K562 (cell line): ENCODE measurements at regions of chr3 and their contacts with region 1.

Region 1: DNA sequence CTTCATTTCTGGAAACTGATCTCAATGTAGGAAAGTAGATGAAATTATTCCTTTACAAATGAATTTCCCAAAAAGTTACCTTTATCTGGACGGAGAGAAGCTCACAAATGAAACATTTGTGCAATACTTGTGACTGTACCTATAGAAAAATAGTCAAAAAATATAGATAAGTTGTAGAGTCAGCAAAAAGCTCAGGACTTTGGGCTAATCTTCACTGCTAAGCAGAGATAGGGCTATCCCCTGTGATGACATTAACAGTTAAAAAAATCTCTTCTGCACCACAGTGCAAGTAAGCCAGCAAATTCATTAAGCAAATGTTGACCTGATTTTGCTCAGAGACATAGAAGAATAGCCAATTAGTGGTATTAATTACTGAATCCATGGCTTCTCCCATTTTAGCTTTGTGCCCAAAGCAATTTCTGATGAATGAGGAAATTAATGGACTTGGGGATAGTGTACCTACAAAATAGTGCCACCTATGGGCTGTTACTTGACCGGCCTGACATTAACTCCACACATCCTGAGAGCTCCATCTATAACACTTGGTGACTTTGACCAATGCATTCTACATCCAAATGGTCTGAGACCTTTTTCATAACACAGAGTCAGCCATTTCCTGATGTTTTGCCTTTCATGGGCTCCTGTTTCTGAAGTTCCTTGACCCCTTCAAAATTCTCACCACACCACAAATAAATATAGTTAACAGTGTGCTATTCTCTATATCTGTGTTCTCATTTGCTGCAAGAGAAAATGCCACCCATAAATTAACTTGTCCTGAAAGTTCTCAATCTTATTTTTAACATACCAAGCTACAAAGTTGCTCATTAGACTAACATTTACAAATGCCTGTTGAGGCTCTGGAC is 105.0 kb downstream of the SSR3 start:
- DNase-seq: peak; percentile 40 to 49 (median 44)
- ATAC-seq: peak; percentile 90
- H3K4me3 ChIP-seq: no peak overlapping the region
- H3K27ac ChIP-seq: no peak overlapping the region
- H3K4me1 ChIP-seq: peaks cover 0 to 2% of the 10 kb centered on the region in 2 experiments; a peak in 1 of 5 replicates
- H3K27me3 ChIP-seq: no peaks in the 10 kb centered on the region
- CTCF ChIP-seq: peak; percentile 57 to 67 (median 66)
- EP300 ChIP-seq: no peak
- POLR2A ChIP-seq: no peak
- RAD21 ChIP-seq: peak; percentile 22 to 48; a peak in 3 of 4 replicates

Region 2: GRCh38 chr3:156151824-156152428 is 298.0 kb before region 1 on chr3:
- CTCF ChIA-PET with region 1: no interaction called
- POLR2A ChIA-PET with region 1: no interaction called
- in situ Hi-C with region 1: no loop called
- intact Hi-C with region 1: loop called (anchors 5 kb)
- DNase-seq: peak; percentile 35 to 69 (median 49)
- ATAC-seq: peak; percentile 91
- H3K4me3 ChIP-seq: no peak overlapping the region
- H3K27ac ChIP-seq: no peak overlapping the region
- H3K4me1 ChIP-seq: peaks cover 0 to 7% of the 10 kb centered on the region in 2 experiments; a peak in 2 of 5 replicates
- H3K27me3 ChIP-seq: peaks cover 2 to 4% of the 10 kb centered on the region in 2 experiments; a peak in 2 of 5 replicates
- CTCF ChIP-seq: peak; percentile 79 to 92 (median 91)
- EP300 ChIP-seq: no peak
- POLR2A ChIP-seq: no peak
- RAD21 ChIP-seq: peak; percentile 67 to 85

Region 3: DNA sequence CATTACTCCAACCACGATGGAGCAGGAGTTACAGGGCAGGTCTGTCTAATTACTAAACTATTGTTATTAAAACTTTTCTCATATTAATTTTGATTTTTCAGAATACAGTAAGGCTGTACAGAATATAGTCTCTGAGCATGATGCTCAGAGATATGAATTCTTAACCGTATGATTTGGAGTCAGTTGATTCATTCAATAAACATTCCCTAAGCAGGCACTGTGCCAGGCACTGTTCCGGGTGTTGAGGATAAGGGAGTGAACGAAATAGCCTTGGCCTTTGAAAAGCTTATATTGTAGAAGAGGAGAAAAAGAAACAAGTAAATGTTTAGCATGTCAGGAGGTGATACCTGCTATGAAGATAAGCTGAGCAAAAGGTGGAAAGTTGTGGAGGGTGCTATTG is 142.2 kb before region 1 on chr3:
- CTCF ChIA-PET with region 1: no interaction called
- POLR2A ChIA-PET with region 1: no interaction called
- in situ Hi-C with region 1: no loop called
- intact Hi-C with region 1: no loop called
- DNase-seq: no peak
- ATAC-seq: no peak
- H3K4me3 ChIP-seq: no peak overlapping the region
- H3K27ac ChIP-seq: no peak overlapping the region
- H3K4me1 ChIP-seq: no peaks in the 10 kb centered on the region
- H3K27me3 ChIP-seq: no peaks in the 10 kb centered on the region; a peak in 1 of 5 replicates
- CTCF ChIP-seq: no peak
- EP300 ChIP-seq: no peak
- POLR2A ChIP-seq: no peak
- RAD21 ChIP-seq: no peak

Region 4: GRCh38 chr3:156474560-156475389 is 24.8 kb after region 1 on chr3:
- CTCF ChIA-PET with region 1: no interaction called
- POLR2A ChIA-PET with region 1: no interaction called
- in situ Hi-C with region 1: no loop called
- intact Hi-C with region 1: loop called (anchors 1 kb)
- DNase-seq: peak in 3 of 4 experiments; percentile 23 to 62 (median 54)
- ATAC-seq: peak; percentile 91
- H3K4me3 ChIP-seq: peak overlapping the region; percentile 17
- H3K27ac ChIP-seq: peak overlapping the region; percentile 31; the same call in 1 of the 3 replicates
- H3K4me1 ChIP-seq: peaks cover 0 to 2% of the 10 kb centered on the region in 2 experiments; a peak in 3 of 5 replicates
- H3K27me3 ChIP-seq: no peaks in the 10 kb centered on the region
- CTCF ChIP-seq: peak; percentile 72 to 78 (median 73)
- EP300 ChIP-seq: no peak
- POLR2A ChIP-seq: no peak
- RAD21 ChIP-seq: peak; percentile 51

Region 5: GRCh38 chr3:156519758-156520162 is 69.8 kb after region 1 on chr3:
- CTCF ChIA-PET with region 1: no interaction called
- POLR2A ChIA-PET with region 1: no interaction called
- in situ Hi-C with region 1: no loop called
- intact Hi-C with region 1: no loop called
- DNase-seq: no peak
- ATAC-seq: no peak
- H3K4me3 ChIP-seq: no peak overlapping the region
- H3K27ac ChIP-seq: no peak overlapping the region
- H3K4me1 ChIP-seq: no peaks in the 10 kb centered on the region; a peak in 1 of 5 replicates
- H3K27me3 ChIP-seq: no peaks in the 10 kb centered on the region; a peak in 2 of 5 replicates
- CTCF ChIP-seq: no peak
- EP300 ChIP-seq: no peak
- POLR2A ChIP-seq: no peak
- RAD21 ChIP-seq: no peak